ENCODE measurements at regions of chrX and their contacts with region 1.

Region 1: GRCh38 chrX:71128915-71129765 is 10.7 kb downstream of the MED12 start:
- DNase-seq: peak; percentile 52 to 81 (median 71)
- ATAC-seq: peak; percentile 95
- H3K4me3 ChIP-seq: no peak overlapping the region
- H3K4me3 Mint-ChIP-seq: peak overlapping the region; percentile 5 to 76 (median 51)
- H3K27ac ChIP-seq: peak overlapping the region; percentile 48
- H3K27ac Mint-ChIP-seq: peak overlapping the region; percentile 53 to 88 (median 78)
- H3K4me1 ChIP-seq: peaks cover 0 to 14% of the 10 kb centered on the region in 2 donors
- H3K4me1 Mint-ChIP-seq: peaks cover 12 to 28% (median 15%) of the 10 kb centered on the region in 7 donors
- H3K27me3 ChIP-seq: no peaks in the 10 kb centered on the region
- H3K27me3 Mint-ChIP-seq: no peaks in the 10 kb centered on the region

Region 2: DNA sequence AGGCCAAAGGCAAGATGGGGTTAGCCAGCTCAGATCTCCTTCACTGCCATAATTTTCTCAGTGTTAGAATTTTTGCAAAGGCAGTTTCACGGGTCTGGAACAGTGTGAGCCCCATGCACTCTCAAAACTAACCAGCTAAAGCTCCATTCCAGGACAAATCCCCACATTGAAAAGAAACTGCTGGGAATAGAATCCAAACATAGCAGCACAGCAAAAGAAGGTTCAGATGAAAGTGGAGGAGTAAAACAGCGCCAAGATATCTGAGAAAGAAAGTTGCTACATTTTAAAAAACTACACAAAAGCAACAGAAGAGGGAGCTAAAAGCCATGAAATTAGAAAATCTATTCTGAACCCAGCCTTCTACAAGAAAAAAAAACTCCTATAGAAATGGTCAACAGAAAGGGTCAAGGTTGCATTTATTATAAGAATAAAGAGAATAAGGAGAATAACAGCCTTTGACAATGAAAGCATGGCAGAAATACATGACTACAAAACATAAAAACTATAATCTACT is 158.6 kb before region 1 on chrX:
- CTCF ChIA-PET with region 1: no interaction called
- POLR2A ChIA-PET with region 1: no interaction called
- intact Hi-C with region 1: loop called (anchors 2 kb)
- DNase-seq: peak in 5 of 9 donors; percentile 1 to 26 (median 6)
- ATAC-seq: no peak
- H3K4me3 ChIP-seq: no peak overlapping the region
- H3K4me3 Mint-ChIP-seq: peak overlapping the region in 7 of 10 donors; percentile 2 to 57 (median 25)
- H3K27ac ChIP-seq: no peak overlapping the region
- H3K27ac Mint-ChIP-seq: no peak overlapping the region
- H3K4me1 ChIP-seq: no peaks in the 10 kb centered on the region
- H3K4me1 Mint-ChIP-seq: peaks cover 0 to 8% (median 3%) of the 10 kb centered on the region in 7 donors
- H3K27me3 ChIP-seq: no peaks in the 10 kb centered on the region
- H3K27me3 Mint-ChIP-seq: peaks cover 0 to 3% (median 0%) of the 10 kb centered on the region in 5 donors

Region 3: DNA sequence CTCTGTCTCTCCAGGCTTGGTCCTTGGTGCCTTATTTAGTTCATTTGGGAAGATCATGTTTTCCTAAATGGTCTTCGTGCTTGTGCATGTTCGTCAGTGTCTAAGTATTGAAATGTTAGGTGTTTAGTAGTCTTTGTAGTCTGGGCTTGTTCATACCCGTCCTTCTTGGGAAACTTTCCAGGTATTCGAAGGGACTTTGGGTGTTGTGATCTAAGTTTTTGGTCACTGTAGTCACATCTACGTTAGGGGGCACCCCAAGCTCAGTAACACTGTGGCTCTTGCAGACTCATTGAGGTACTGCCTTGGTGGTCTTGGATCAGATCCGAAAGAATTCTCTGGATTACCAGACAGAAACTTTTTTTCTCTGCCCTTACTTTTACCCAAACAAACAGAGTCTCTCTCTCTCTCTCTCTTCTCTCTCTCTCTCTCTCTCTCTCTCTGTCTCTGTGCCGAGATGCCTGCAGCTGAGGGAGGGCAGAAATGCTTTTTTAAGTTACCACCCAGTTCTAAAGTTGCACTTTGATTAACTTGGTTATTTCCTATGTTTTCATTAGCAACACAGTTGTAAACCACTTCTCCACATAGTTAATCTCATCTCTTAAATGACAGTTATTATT is 130.6 kb before region 1 on chrX:
- CTCF ChIA-PET with region 1: no interaction called
- POLR2A ChIA-PET with region 1: no interaction called
- intact Hi-C with region 1: loop called in 1 of 2 experiments (anchors 1 kb)
- DNase-seq: peak in 4 of 9 donors; percentile 2 to 27 (median 20)
- ATAC-seq: no peak
- H3K4me3 ChIP-seq: no peak overlapping the region
- H3K4me3 Mint-ChIP-seq: peak overlapping the region in 1 of 10 donors; percentile 40
- H3K27ac ChIP-seq: no peak overlapping the region
- H3K27ac Mint-ChIP-seq: peak overlapping the region in 1 of 9 donors; percentile 56
- H3K4me1 ChIP-seq: peaks cover 0 to 7% of the 10 kb centered on the region in 2 donors
- H3K4me1 Mint-ChIP-seq: peaks cover 2 to 22% (median 19%) of the 10 kb centered on the region in 7 donors
- H3K27me3 ChIP-seq: no peaks in the 10 kb centered on the region
- H3K27me3 Mint-ChIP-seq: peaks cover 0 to 18% (median 0%) of the 10 kb centered on the region in 5 donors

Region 4: GRCh38 chrX:71103110-71103983 is 25.8 kb before region 1 on chrX:
- CTCF ChIA-PET with region 1: interaction called, 59 read pairs
- POLR2A ChIA-PET with region 1: interaction called, 105 read pairs
- intact Hi-C with region 1: loop called (anchors 1 kb)
- DNase-seq: peak in 8 of 9 donors; percentile 46 to 61 (median 58)
- ATAC-seq: peak; percentile 73
- H3K4me3 ChIP-seq: peak overlapping the region; percentile 45
- H3K4me3 Mint-ChIP-seq: peak overlapping the region; percentile 75 to 98 (median 85)
- H3K27ac ChIP-seq: peak overlapping the region; percentile 82
- H3K27ac Mint-ChIP-seq: peak overlapping the region; percentile 90 to 99 (median 92)
- H3K4me1 ChIP-seq: peaks cover 62 to 74% of the 10 kb centered on the region in 2 donors
- H3K4me1 Mint-ChIP-seq: peaks cover 44 to 92% (median 79%) of the 10 kb centered on the region in 7 donors
- H3K27me3 ChIP-seq: no peaks in the 10 kb centered on the region
- H3K27me3 Mint-ChIP-seq: no peaks in the 10 kb centered on the region

Region 5: GRCh38 chrX:71111141-71111843 is 17.8 kb before region 1 on chrX and contains the start of gene IL2RG:
- CTCF ChIA-PET with region 1: interaction called, 15 read pairs
- POLR2A ChIA-PET with region 1: interaction called, 19 read pairs
- intact Hi-C with region 1: loop called (anchors 1 kb)
- DNase-seq: peak; percentile 37 to 92 (median 87)
- ATAC-seq: peak; percentile 95
- H3K4me3 ChIP-seq: peak within 1 kb of the TSS; percentile 80
- H3K4me3 Mint-ChIP-seq: peak within 1 kb of the TSS; percentile 93 to 98 (median 98)
- H3K27ac ChIP-seq: peak within 1 kb of the TSS; percentile 96
- H3K27ac Mint-ChIP-seq: peak within 1 kb of the TSS; percentile 96 to 100 (median 98)
- H3K4me1 ChIP-seq: peaks cover 28 to 39% of the 10 kb centered on the region in 2 donors
- H3K4me1 Mint-ChIP-seq: peaks cover 24 to 69% (median 43%) of the 10 kb centered on the region in 7 donors
- H3K27me3 ChIP-seq: no peaks in the 10 kb centered on the region
- H3K27me3 Mint-ChIP-seq: no peaks in the 10 kb centered on the region
- total RNA-seq, gene IL2RG: 228 to 671 (median 329) TPM

Region 6: GRCh38 chrX:71118032-71118984 is 10.8 kb before region 1 on chrX and contains the start of gene MED12:
- CTCF ChIA-PET with region 1: interaction called, 7 read pairs
- POLR2A ChIA-PET with region 1: interaction called, 29 read pairs
- intact Hi-C with region 1: loop called (anchors 1 kb)
- DNase-seq: peak; percentile 59 to 83 (median 75)
- ATAC-seq: peak; percentile 96
- H3K4me3 ChIP-seq: peak within 1 kb of the TSS; percentile 87
- H3K4me3 Mint-ChIP-seq: peak within 1 kb of the TSS; percentile 81 to 93 (median 86)
- H3K27ac ChIP-seq: peak within 1 kb of the TSS; percentile 93
- H3K27ac Mint-ChIP-seq: peak within 1 kb of the TSS; percentile 84 to 95 (median 92)
- H3K4me1 ChIP-seq: peaks cover 9 to 13% of the 10 kb centered on the region in 2 donors
- H3K4me1 Mint-ChIP-seq: peaks cover 10 to 43% (median 24%) of the 10 kb centered on the region in 7 donors
- H3K27me3 ChIP-seq: no peaks in the 10 kb centered on the region
- H3K27me3 Mint-ChIP-seq: no peaks in the 10 kb centered on the region
- total RNA-seq, gene MED12: 71.1 to 104 (median 77.4) TPM